H1 (cell line): ENCODE measurements at regions of chr20 and their contacts with region 1.

Region 1: GRCh38 chr20:45833030-45833882 is at the start of gene SNX21:
- DNase-seq: peak in 1 of 2 experiments; percentile 90
- H3K4me3 ChIP-seq: peak within 1 kb of the TSS; percentile 61 to 77 (median 74)
- H3K27ac ChIP-seq: peak within 1 kb of the TSS; percentile 73
- H3K4me1 ChIP-seq: peaks cover 0 to 17% (median 8%) of the 10 kb centered on the region in 4 experiments; a peak in 6 of 7 replicates
- H3K27me3 ChIP-seq: no peaks in the 10 kb centered on the region
- CTCF ChIP-seq: no peak
- EP300 ChIP-seq: peak in 1 of 2 experiments; percentile 14; a peak in 1 of 3 replicates
- POLR2A ChIP-seq: peak in 1 of 2 experiments; percentile 58; a peak in 1 of 3 replicates
- RAD21 ChIP-seq: 0 out of 4 replicates have a peak, but pooled peaks of 1 of the 2 experiments have one; percentile 4
- total RNA-seq, gene SNX21: 16.1 and 16.8 TPM in 2 replicates

Region 2: DNA sequence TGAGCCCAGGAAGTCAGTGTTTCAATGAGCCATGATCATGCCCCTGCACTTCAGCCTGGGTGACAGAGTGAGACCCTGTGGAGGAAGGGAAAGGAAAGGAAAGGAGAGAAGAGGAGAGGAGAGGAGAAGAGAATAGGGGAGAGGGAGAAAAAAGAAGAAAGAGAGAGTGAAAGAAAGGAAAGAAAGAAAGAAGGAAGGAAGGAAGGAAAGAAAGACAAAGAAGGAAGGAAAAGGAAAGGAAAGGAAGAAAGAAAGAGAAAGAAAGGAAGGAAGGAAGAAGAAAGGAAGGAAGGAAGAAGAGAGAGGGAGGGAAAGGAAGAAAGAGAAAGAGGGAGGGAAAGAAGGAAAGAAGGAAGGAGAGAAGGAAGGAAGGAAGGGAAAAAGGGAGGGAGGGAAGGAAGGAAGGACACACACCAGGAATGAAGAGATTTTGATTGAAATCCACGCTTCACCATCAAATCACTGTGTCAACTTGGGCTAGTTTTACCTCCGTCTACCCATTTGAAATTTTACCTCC is 268.4 kb before region 1 on chr20:
- CTCF ChIA-PET with region 1: no interaction called
- POLR2A ChIA-PET with region 1: no interaction called
- DNase-seq: no peak
- H3K4me3 ChIP-seq: no peak overlapping the region
- H3K27ac ChIP-seq: no peak overlapping the region
- H3K4me1 ChIP-seq: no peaks in the 10 kb centered on the region
- H3K27me3 ChIP-seq: no peaks in the 10 kb centered on the region
- CTCF ChIP-seq: no peak
- EP300 ChIP-seq: no peak
- POLR2A ChIP-seq: no peak
- RAD21 ChIP-seq: no peak

Region 3: GRCh38 chr20:45812157-45813020 is 20.9 kb before region 1 on chr20 and contains the start of gene UBE2C:
- CTCF ChIA-PET with region 1: interaction called, 5 read pairs
- POLR2A ChIA-PET with region 1: interaction called, 96 read pairs
- DNase-seq: peak; percentile 96 to 99
- H3K4me3 ChIP-seq: peak within 1 kb of the TSS; percentile 91 to 100 (median 98)
- H3K27ac ChIP-seq: peak within 1 kb of the TSS; percentile 74; the same call in 1 of the 2 replicates
- H3K4me1 ChIP-seq: peaks cover 0 to 4% (median 2%) of the 10 kb centered on the region in 4 experiments; a peak in 3 of 7 replicates
- H3K27me3 ChIP-seq: no peaks in the 10 kb centered on the region
- CTCF ChIP-seq: no peak
- EP300 ChIP-seq: no peak
- POLR2A ChIP-seq: peak; percentile 47 to 64; a peak in 2 of 3 replicates
- RAD21 ChIP-seq: no peak
- total RNA-seq, gene UBE2C: 243 and 255 TPM in 2 replicates

Region 4: DNA sequence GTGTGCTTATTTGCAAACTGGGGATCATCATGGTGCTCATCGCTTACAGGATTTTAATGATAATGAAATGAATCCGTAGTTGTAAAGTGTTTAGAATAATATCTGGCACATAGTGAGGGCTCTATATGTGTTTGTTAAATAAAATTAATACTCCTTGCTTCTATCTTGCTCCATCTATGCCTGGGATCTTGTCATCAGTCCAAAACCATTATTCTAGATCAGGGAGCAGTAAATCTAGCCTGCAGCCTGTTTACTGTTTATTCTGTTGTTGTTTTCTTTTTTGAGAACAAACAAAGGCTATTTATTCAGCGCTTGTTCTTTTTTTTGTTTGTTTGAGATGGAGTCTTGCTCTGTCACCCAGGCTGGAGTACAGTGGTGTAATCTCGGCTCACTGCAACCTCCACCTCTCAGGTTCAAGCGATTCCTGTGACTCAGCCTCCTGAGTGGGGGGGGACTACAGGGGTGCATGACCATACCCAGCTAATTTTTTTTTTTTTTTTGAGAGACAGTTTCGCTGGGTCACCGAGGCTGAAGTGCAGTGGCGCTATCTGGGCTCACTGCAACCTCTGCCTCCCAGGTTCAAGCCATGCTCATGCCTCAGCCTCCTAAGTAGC is 15.8 kb after region 1 on chr20:
- CTCF ChIA-PET with region 1: interaction called, 4 read pairs
- POLR2A ChIA-PET with region 1: interaction called, 178 read pairs
- DNase-seq: no peak
- H3K4me3 ChIP-seq: no peak overlapping the region
- H3K27ac ChIP-seq: no peak overlapping the region
- H3K4me1 ChIP-seq: peaks cover 3 to 6% (median 4%) of the 10 kb centered on the region in 4 experiments; a peak in 5 of 7 replicates
- H3K27me3 ChIP-seq: no peaks in the 10 kb centered on the region
- CTCF ChIP-seq: no peak
- EP300 ChIP-seq: no peak
- POLR2A ChIP-seq: no peak
- RAD21 ChIP-seq: no peak

Region 5: GRCh38 chr20:45857114-45857881 is 24.0 kb after region 1 on chr20 and contains the starts of genes ACOT8 and ZSWIM3:
- CTCF ChIA-PET with region 1: interaction called, 3 read pairs
- POLR2A ChIA-PET with region 1: interaction called, 178 read pairs
- DNase-seq: peak; percentile 90 to 96
- H3K4me3 ChIP-seq: peak within 1 kb of the TSS; percentile 69 to 94 (median 77)
- H3K27ac ChIP-seq: peak within 1 kb of the TSS; percentile 49; the same call in 1 of the 2 replicates
- H3K4me1 ChIP-seq: peaks cover 10 to 16% (median 13%) of the 10 kb centered on the region in 4 experiments
- H3K27me3 ChIP-seq: no peaks in the 10 kb centered on the region
- CTCF ChIP-seq: no peak
- EP300 ChIP-seq: no peak
- POLR2A ChIP-seq: peak in 1 of 2 experiments; percentile 47; a peak in 1 of 3 replicates
- RAD21 ChIP-seq: no peak
- total RNA-seq, gene ACOT8: 37.3 and 37.6 TPM in 2 replicates
- total RNA-seq, gene ZSWIM3: 6.8 and 6.9 TPM in 2 replicates

Region 6: DNA sequence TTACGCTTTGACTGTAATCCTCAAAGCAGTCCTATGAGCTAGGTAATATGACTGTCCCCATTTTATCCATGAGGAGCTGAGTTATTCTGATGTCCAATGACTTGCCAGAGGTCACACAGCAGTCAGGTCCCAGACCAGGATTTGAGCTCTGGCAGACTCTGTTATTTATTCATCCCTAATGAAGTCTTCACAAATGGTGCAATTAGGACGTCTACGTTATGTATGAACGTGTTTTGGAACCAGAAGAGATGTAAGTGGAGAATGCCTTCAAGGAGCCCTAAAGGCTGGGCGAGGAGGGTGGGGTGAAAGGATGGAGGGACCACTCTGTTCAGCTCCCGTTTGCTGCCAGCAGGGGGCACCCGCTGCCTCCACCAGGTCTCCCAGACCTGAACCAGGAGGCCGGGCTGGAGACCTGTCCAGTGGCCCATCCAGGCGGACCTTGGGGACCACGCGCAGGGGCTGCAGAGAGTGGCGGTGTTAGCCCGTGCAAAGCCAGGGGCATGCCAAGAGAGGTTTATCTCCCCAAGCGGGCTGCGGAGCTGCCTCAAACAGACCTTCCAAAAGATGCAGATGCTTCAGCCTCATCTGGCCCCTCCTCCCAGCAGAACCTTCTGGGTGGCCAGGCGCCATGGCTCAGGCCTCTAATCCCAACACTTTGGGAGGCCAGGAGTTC is 154.0 kb after region 1 on chr20:
- CTCF ChIA-PET with region 1: no interaction called
- POLR2A ChIA-PET with region 1: no interaction called
- DNase-seq: peak in 1 of 2 experiments; percentile 95
- H3K4me3 ChIP-seq: no peak overlapping the region
- H3K27ac ChIP-seq: no peak overlapping the region
- H3K4me1 ChIP-seq: peaks cover 0 to 8% (median 6%) of the 10 kb centered on the region in 4 experiments; a peak in 5 of 7 replicates
- H3K27me3 ChIP-seq: no peaks in the 10 kb centered on the region
- CTCF ChIP-seq: peak; percentile 90 to 96 (median 95)
- EP300 ChIP-seq: no peak
- POLR2A ChIP-seq: no peak
- RAD21 ChIP-seq: peak; percentile 79 to 89